Activated CD8-positive, alpha-beta T cell treated with anti-CD3 and anti-CD28 coated beads, Interleukin-2, amount 10 ng/mL, durations not matched to agents 7 days and 5 days (primary cell): ENCODE measurements at regions of chr20 and their contacts with region 1.

Region 1: DNA sequence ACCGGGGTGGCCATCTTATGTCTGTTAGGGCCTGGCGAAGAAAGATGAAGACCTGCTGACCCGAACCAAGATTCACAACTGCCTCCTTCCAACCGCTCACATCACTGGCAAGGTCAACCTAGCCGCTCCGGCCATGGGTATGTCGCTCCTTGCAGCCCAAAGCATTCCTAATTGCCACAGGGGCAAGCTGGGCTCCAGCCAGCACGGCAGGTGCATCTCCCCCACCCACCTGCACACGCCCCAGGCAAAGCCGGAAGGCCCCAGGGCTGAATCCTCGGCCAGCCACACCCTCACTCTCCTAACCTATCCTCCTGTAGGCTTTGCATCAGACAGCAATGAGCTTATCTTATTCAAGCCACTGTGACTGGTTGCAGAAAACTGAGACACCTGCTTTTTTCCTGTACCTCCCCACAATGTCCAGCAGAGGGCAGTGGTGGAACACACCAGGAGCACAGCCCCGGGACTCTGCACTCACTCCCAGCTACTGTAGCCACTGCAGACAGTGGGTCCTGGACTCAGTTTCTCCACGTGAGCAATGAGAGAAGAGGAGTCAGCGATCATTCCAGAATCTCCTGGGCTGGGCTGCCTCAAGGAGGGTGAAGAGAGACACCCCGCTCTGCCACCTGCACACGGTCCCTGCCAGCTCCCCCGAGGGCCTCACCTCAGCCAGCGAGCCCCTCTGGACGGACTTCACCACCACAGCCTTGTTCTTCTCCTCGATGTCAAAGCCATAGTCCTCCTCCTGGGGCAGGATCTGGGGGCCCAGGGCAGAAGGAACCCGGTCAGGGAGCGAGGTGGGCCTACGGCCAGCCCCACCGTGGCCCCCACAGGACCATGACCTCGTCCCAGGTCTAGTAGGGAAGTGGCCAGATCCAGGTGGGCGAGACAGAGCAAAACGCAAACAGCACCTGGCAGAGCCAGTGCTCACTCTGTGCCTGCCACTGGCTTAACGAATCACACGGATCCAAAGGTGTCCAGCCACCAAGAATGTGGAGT is 170.0 kb downstream of the PREX1 start:
- DNase-seq: peak; percentile 77
- ATAC-seq: peak; percentile 76
- H3K4me3 Mint-ChIP-seq: no peak overlapping the region
- H3K27ac Mint-ChIP-seq: peak overlapping the region; percentile 68
- H3K4me1 Mint-ChIP-seq: peaks cover 25% of the 10 kb centered on the region
- H3K27me3 Mint-ChIP-seq: no peaks in the 10 kb centered on the region

Region 2: GRCh38 chr20:48642105-48642504 is 15.7 kb before region 1 on chr20:
- CTCF ChIA-PET with region 1: interaction called, 12 read pairs
- POLR2A ChIA-PET with region 1: interaction called, 3 read pairs
- DNase-seq: no peak
- ATAC-seq: no peak
- H3K4me3 Mint-ChIP-seq: no peak overlapping the region
- H3K27ac Mint-ChIP-seq: no peak overlapping the region
- H3K4me1 Mint-ChIP-seq: peaks cover 22% of the 10 kb centered on the region
- H3K27me3 Mint-ChIP-seq: no peaks in the 10 kb centered on the region

Region 3: DNA sequence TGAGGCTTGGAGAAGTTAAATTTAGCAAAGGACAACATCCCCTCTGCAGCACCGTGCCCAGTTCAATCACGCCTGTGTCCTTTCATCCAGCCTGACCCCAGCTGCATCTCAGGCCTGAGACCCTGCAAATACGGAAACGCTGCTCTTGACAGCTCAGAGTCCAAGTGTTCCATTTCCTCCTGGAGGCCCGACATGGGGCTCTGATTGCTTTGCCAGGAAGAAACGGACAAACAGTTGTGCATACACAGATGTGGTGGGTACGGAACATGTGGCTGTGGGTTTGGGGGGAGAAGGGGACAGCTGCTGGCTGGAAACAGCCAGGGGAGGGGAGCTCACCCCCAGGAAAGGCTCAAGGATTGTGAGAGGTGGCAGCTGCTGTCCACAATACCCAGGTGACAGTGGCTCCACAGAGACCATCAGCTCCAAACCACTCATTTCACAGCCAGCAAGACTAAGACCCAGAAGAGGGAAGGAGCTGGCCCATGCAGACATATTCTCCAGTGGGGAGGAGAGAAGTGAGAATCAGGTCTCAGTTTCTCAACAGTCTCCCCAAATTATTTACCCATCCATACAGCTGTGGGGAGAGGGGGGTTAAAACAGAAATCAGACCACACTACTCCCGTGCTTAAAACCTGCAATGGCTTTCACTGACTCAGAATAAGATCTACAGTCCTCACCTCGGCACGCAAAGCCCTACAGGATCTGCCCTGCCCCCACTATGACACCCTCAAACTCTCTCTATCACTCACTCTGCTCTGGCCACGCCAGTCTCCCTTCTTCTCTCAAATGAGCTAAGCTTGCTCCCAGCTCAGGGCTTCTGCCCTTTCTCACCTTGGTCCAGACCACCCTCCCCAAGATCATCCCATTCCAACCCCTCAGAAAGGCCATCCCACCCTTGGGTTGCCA is 80.9 kb after region 1 on chr20:
- CTCF ChIA-PET with region 1: interaction called, 12 read pairs
- POLR2A ChIA-PET with region 1: no interaction called
- DNase-seq: peak; percentile 91
- ATAC-seq: peak; percentile 87
- H3K4me3 Mint-ChIP-seq: peak overlapping the region; percentile 45
- H3K27ac Mint-ChIP-seq: peak overlapping the region; percentile 89
- H3K4me1 Mint-ChIP-seq: peaks cover 83% of the 10 kb centered on the region
- H3K27me3 Mint-ChIP-seq: no peaks in the 10 kb centered on the region

Region 4: GRCh38 chr20:48760403-48760983 is 102.7 kb after region 1 on chr20:
- CTCF ChIA-PET with region 1: interaction called, 11 read pairs
- POLR2A ChIA-PET with region 1: no interaction called
- DNase-seq: peak; percentile 89
- ATAC-seq: peak; percentile 74
- H3K4me3 Mint-ChIP-seq: peak overlapping the region; percentile 67
- H3K27ac Mint-ChIP-seq: peak overlapping the region; percentile 99
- H3K4me1 Mint-ChIP-seq: peaks cover 94% of the 10 kb centered on the region
- H3K27me3 Mint-ChIP-seq: no peaks in the 10 kb centered on the region

Region 5: DNA sequence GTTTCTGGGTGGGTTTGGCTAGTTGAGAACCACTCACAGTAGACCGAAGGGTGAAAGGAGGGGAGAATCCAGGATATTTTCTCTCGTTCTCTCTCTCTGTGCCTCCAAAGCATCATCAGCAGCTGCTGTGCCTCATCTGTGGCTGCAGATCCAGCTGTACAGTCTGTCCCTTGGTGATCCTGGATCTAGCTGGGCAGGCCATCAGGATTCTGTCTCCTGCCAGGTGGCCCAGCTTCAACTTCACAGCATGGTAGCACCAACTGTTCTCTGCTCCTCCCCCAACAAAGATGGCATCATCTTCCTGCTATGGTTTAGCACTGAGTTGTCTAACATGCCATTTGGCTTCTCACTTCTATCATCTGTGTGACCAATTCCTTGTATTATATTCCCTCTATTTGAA is 235.1 kb after region 1 on chr20:
- CTCF ChIA-PET with region 1: interaction called, 11 read pairs
- POLR2A ChIA-PET with region 1: no interaction called
- DNase-seq: no peak
- ATAC-seq: no peak
- H3K4me3 Mint-ChIP-seq: no peak overlapping the region
- H3K27ac Mint-ChIP-seq: no peak overlapping the region
- H3K4me1 Mint-ChIP-seq: no peaks in the 10 kb centered on the region
- H3K27me3 Mint-ChIP-seq: peaks cover 28% of the 10 kb centered on the region

Region 6: DNA sequence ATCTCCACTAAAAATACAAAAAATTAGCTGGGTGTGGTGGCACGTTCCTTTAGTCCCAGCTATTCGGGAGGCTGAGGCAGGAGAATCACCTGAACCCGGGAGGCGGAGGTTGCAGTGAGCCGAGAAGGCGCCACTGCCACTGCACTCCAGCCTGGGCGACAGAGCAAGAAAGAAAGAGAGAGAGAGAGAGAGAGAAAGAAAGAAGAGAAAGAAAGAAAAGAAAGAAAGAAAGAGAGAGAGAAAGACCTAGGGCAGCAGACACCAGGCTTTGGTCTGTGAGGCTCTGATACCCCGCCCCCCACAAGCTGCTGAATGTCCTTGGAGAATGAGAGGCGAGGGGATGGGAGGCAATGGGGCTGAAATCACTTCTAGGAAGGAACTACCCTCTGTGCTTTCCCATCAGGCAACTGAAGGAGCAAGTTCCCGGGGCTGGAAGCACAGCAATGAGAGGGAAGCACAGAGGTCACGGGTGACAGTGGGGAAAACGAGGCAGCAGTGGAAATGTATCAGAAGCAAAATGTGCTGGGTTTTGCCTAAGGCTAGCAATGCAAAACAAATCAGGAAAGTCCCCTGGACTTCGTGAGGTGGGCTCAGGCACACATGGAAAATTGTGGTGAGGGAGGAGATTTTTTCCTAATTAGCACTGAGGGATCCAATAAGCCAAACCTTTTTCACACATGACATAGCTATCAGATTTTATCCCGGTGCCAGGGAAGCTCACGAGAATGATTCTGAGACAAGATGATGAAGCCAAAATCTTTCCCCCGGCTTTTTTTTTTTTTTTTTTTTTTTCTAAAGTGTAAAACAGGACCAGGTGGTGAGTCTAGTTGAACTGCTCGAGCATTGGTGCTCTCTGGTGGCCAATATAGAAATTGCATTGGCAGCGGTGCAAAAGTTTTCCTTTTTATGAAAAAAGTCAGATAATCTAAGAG is 246.9 kb after region 1 on chr20:
- CTCF ChIA-PET with region 1: interaction called, 47 read pairs
- POLR2A ChIA-PET with region 1: no interaction called
- DNase-seq: peak; percentile 83
- ATAC-seq: peak; percentile 60
- H3K4me3 Mint-ChIP-seq: no peak overlapping the region
- H3K27ac Mint-ChIP-seq: no peak overlapping the region
- H3K4me1 Mint-ChIP-seq: peaks cover 18% of the 10 kb centered on the region
- H3K27me3 Mint-ChIP-seq: peaks cover 12% of the 10 kb centered on the region